ENCODE measurements at regions of chr2 and their contacts with region 1.

Region 1: DNA sequence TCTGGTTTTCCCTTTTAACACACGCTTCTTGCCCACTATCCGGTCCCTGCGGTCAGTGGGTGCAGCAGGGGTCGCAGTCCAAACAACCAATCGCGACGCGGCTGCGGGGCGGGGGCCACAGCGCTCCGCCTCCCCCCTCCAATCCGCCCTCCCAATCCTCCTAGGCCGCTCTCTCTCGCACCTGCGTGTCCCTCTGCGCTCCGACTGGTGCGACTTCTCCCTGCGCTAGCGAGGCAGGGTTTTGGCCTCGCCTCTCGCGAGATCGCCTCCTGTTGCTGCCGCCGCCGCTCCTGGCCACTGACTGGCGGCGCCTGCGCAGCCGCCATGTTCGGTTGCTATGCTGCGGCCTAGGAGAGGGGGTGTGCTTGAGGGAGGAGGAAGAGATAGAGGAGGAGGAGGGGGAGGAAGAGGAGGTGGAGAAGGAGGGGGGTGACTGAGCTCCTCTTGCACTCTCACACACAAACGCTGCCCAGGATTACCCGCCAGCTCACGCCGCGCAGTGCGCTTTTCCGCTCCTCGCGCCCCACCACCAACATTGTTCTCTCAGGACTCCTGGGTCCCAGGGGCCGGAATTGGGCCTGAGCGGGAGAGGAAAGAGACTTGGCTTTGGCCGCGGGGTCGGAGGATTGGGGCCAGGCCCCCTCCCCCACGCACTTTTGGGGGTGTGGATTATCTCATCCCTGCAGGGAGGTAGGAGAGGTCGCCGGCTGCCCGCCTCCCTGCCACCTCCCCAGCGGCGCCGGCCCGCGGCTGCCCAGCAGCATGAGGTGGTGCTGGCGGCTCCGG is at the start of gene PTPN4:
- DNase-seq: peak; percentile 97
- H3K4me3 ChIP-seq: peak within 1 kb of the TSS; percentile 77 to 88
- H3K27ac ChIP-seq: peak within 1 kb of the TSS; percentile 87 to 93
- H3K4me1 ChIP-seq: no peaks in the 10 kb centered on the region
- H3K27me3 ChIP-seq: no peaks in the 10 kb centered on the region
- CTCF ChIP-seq: no peak
- POLR2A ChIP-seq: peak; percentile 82
- total RNA-seq, gene PTPN4: 23.7 to 65.3 TPM

Region 2: DNA sequence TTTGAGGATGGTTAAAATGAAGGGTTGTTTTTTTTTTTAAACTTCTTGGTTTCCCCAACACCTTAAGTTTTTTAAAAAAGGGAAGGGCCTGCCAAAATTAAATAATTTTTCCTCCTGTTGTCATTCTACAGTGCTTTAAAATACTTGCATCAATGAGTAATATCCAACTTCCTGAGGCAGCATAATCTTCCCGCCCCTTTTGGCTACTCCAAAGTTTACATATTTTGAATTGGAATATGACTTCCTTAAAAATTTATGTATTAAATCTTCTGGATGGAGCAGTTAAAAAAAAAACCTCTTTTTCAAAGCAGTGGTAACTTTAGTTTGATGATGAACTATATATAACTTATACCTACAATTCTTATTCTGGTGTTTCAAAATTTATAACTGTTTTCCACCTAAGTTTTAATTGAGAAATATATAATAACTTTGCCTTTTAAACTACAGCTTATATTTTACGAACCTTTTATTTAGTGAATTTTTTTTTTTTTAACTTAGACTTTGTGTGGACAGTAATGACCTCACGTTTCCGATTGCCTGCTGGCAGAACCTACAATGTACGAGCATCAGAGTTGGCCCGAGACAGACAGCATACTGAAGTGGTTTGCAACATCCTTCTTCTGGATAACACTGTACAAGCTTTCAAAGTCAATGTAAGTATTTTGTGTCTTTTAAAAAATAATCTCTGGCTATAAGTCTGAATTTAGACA is 49.9 kb after region 1 on chr2:
- intact Hi-C with region 1: loop called (anchors 5 kb)
- DNase-seq: no peak
- H3K4me3 ChIP-seq: no peak overlapping the region
- H3K27ac ChIP-seq: peak overlapping the region in 1 of 2 donors; percentile 7
- H3K4me1 ChIP-seq: no peaks in the 10 kb centered on the region
- H3K27me3 ChIP-seq: no peaks in the 10 kb centered on the region
- CTCF ChIP-seq: no peak
- POLR2A ChIP-seq: no peak

Region 3: GRCh38 chr2:119823734-119824334 is 64.2 kb after region 1 on chr2:
- intact Hi-C with region 1: loop called (anchors 5 kb)
- DNase-seq: no peak
- H3K4me3 ChIP-seq: no peak overlapping the region
- H3K27ac ChIP-seq: no peak overlapping the region
- H3K4me1 ChIP-seq: no peaks in the 10 kb centered on the region
- H3K27me3 ChIP-seq: no peaks in the 10 kb centered on the region
- CTCF ChIP-seq: peak in 3 of 4 experiments; percentile 25 to 52 (median 50)
- POLR2A ChIP-seq: no peak

Region 4: DNA sequence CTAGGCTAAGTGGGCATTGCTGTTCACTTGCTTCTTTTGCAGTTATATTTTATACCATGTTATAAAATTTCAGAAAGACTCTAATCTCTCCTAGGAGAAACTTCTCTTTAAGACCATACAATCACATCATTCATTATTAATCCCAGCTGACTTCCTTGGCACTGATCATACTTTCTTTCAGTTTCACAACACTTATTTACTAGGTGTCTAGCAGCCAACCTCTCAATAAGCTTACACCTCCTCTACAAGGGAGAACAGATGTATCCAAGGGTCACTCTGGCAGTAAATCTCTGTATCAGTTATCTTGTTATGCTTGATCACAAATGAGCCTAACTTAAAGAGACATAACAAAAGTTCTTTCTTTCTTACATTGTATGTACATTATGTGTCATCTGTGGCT is 183.4 kb after region 1 on chr2:
- intact Hi-C with region 1: loop called (anchors 10 kb)
- DNase-seq: no peak
- H3K4me3 ChIP-seq: no peak overlapping the region
- H3K27ac ChIP-seq: no peak overlapping the region
- H3K4me1 ChIP-seq: no peaks in the 10 kb centered on the region
- H3K27me3 ChIP-seq: no peaks in the 10 kb centered on the region
- CTCF ChIP-seq: no peak
- POLR2A ChIP-seq: no peak

Region 5: DNA sequence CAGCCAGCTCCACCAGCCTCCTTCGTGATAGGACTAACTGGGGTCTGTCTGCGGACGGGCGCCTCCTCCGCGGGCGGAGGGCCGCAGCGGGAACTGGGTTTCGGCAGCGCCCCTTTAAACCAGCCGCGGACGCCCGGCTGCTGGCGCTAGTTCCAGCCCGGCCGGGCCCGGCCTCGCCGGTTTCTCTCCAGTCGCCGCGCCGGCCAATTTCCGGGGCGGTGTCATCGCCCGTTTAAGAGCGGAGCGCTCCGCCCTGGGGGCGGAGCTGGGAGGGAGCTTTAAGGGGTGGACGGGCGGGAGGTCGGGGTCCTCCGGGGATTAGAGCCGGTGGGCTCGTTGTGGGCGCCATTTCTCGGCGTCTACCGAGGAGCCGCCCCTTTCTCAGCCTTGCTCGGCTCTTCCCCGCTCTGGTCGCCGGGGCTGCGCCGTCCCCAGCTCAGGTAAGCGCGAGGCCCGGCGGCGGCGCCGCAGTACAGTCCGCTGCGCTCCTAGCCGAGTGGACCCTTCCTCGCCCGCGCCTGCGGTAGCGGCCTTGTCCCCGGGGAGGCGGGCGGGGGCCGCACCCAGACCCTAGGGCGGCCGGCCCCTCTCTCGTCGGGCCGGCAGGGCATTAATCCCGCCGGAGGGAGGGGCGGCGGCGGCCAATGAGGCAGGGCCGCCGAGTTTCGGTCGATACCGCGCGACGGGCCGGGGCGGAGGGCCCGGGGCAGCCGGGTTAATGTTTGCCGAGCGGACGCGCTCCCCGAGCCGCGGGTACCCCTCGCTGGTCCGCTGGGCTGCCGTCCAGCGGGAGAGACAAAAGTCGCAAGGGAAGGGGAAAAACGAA is 253.3 kb after region 1 on chr2 and contains the start of gene EPB41L5:
- intact Hi-C with region 1: loop called (anchors 2 kb)
- DNase-seq: peak; percentile 90
- H3K4me3 ChIP-seq: peak within 1 kb of the TSS; percentile 95 to 100
- H3K27ac ChIP-seq: peak within 1 kb of the TSS; percentile 91
- H3K4me1 ChIP-seq: no peaks in the 10 kb centered on the region
- H3K27me3 ChIP-seq: no peaks in the 10 kb centered on the region
- CTCF ChIP-seq: no peak
- POLR2A ChIP-seq: peak; percentile 61
- total RNA-seq, gene EPB41L5: 37.1 to 51.1 TPM